ENCODE measurements at regions of chr17 and their contacts with region 1.

Region 1: DNA sequence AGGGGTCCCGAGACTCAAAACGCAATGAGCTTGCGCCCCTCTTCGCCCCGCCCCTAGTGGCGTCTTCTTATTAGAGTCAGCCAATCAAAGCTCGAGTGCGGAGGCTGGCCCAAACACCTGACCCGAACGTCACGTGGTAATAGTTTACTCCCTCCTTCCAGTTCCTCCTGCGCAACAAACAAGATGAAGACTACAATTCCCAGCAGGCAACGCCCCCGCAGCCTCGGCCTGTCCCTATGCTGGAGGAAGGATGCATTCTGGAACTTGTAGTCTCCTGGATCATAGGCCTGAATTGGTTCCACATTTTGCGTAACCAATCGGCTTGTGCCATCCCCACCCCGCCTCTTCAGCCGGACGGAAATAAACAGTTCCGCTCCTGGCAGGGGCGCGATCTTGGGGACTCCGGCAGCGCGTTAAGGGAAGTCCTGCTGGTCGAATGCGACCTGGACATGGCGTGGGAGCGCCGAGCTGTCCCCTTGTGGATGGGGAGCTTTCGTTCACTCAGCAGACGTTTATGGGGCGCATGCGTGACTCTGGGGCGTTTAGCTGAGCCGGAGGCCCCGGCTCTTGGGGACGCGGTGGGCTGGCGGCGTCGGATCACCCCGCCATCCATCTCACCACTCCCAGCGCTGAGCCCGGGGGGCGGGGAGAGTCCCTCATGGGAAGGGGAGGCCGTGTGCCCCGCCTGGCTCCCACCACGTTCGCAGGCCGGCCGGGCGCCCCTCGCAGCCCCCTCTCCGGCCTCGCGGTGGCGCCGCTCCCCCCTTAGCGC is at the start of gene WBP2:
- DNase-seq: peak; percentile 100
- H3K4me3 ChIP-seq: peak within 1 kb of the TSS; percentile 19 to 76 (median 75)
- H3K27ac ChIP-seq: peak within 1 kb of the TSS; percentile 89
- H3K4me1 ChIP-seq: peaks cover 39% of the 10 kb centered on the region
- H3K27me3 ChIP-seq: no peaks in the 10 kb centered on the region
- CTCF ChIP-seq: peak; percentile 42 to 54
- POLR2A ChIP-seq: peak; percentile 81
- total RNA-seq, gene WBP2: 120 and 126 TPM in 2 replicates

Region 2: GRCh38 chr17:75565068-75565467 is 290.4 kb before region 1 on chr17:
- CTCF ChIA-PET with region 1: no interaction called
- POLR2A ChIA-PET with region 1: no interaction called
- dilution Hi-C with region 1: no loop called
- intact Hi-C with region 1: no loop called
- DNase-seq: no peak
- H3K4me3 ChIP-seq: no peak overlapping the region
- H3K27ac ChIP-seq: no peak overlapping the region
- H3K4me1 ChIP-seq: no peaks in the 10 kb centered on the region
- H3K27me3 ChIP-seq: no peaks in the 10 kb centered on the region
- CTCF ChIP-seq: no peak
- POLR2A ChIP-seq: no peak

Region 3: GRCh38 chr17:75872434-75873351 is 17.2 kb after region 1 on chr17:
- CTCF ChIA-PET with region 1: interaction called, 241 read pairs
- POLR2A ChIA-PET with region 1: interaction called, 19 read pairs
- dilution Hi-C with region 1: no loop called
- intact Hi-C with region 1: loop called (anchors 1 kb)
- DNase-seq: peak; percentile 95
- H3K4me3 ChIP-seq: no peak overlapping the region
- H3K27ac ChIP-seq: peak overlapping the region; percentile 95
- H3K4me1 ChIP-seq: peaks cover 43% of the 10 kb centered on the region
- H3K27me3 ChIP-seq: no peaks in the 10 kb centered on the region
- CTCF ChIP-seq: no peak
- POLR2A ChIP-seq: peak; percentile 63

Region 4: DNA sequence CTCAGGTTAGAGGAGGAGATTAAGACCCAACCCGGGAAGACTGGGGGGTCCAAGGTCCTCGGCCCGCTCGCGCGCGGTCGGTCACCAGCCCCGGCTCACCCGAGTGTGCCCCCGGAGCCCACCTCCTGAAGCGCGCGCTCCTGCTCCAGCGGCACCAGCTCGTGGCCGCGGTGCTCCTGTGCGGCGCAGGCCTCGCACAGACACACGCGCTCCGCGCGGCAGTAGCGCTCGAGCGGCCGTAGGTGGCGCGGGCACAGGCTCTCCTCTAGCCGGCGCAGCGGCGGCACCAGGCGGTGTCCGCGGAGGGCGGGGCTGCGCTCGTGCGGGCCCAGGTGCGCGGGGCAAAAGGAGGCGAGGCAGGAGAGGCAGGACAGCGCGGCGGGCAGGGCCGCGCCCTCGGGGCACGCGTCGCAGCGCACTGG is 22.3 kb after region 1 on chr17:
- CTCF ChIA-PET with region 1: interaction called, 241 read pairs
- POLR2A ChIA-PET with region 1: interaction called, 19 read pairs
- dilution Hi-C with region 1: no loop called
- intact Hi-C with region 1: loop called (anchors 1 kb)
- DNase-seq: peak; percentile 74
- H3K4me3 ChIP-seq: peak overlapping the region; percentile 1 to 67 (median 66)
- H3K27ac ChIP-seq: peak overlapping the region; percentile 70
- H3K4me1 ChIP-seq: peaks cover 34% of the 10 kb centered on the region
- H3K27me3 ChIP-seq: no peaks in the 10 kb centered on the region
- CTCF ChIP-seq: peak; percentile 33 to 66
- POLR2A ChIP-seq: no peak

Region 5: DNA sequence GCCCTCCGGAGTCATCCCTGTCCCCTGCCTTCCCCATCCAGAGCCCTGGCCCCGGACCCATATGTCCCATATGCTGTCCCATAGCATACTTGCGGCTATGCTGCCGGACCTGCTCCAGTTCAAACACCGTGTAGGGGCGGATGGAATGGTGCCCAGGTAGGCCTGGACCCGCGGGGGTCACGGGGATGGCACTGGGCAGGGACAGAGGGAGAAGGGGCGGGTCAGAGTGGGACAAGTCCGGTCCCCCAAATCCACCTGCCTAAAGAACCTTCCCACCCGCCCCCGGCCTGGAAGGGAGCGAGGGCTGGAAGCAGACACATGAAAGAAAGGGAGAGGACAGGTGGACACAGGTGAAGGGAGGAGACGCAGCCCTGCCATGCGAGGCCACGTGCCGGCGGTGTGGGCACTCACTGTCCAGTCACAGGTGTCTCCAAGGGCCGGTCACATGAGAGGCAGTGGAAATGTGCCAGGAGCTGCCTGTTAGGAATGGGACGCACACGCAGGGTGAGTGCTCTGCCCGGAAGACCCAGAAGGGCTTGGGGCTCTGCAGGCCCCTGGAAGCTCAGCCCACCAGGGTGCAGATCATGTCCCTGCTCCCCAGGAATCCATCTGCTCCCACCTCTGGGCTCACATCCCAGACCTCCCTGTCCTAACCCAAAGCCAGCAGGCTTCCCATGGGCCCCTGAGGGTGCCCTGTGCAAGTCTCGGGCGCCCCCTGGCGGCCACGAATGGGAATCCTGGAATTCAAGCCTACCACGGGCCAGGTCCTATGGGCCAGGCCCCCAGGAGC is 423.7 kb after region 1 on chr17:
- CTCF ChIA-PET with region 1: no interaction called
- POLR2A ChIA-PET with region 1: no interaction called
- dilution Hi-C with region 1: no loop called
- intact Hi-C with region 1: no loop called
- DNase-seq: peak; percentile 70
- H3K4me3 ChIP-seq: no peak overlapping the region
- H3K27ac ChIP-seq: no peak overlapping the region
- H3K4me1 ChIP-seq: no peaks in the 10 kb centered on the region
- H3K27me3 ChIP-seq: no peaks in the 10 kb centered on the region
- CTCF ChIP-seq: peak; percentile 89 to 91
- POLR2A ChIP-seq: no peak